AG04449 (cell line): ENCODE measurements at regions of chr11 and their contacts with region 1.

Region 1: DNA sequence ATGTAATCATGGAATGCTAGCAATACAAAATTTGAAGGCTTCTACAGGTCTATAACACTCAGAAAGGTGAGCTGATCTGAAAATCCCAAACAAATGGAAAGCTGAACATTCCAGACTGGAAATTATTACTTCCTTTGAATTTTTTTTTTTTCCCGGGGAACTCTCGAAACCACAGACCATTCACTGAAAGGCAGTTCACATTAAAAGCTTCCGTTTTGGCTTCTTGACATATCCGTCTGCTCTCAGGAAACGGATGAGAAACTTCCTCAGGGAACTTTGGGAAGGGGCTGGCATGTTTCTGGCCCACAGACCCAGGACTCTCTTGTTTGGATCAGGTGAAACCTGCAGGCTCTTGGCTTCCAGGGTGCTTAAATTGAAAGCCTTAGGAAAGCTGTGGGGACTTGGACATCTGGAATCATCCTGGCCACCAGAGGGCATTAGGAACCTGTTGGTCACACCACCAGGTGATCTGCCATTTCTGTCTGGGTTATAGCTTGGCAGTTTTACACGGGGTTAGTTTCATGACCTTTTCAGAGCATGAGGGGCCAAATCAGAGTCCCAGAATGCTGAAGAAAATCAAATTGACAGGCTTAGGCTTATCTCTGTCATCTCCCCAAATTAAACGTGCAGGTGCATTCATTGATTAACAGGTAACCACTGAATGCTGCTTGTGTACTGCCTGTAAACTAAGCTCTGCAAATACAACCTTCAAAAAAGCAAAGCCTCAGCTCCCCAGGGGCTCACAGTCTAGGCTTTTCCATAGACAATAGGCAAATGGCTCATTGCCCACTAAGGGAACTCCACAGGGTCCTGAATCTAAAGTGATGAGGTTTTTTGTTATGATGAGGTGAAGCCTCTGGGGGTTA is 22.7 kb upstream of the GRAMD1B start:
- DNase-seq: no peak
- H3K4me3 ChIP-seq: no peak overlapping the region
- CTCF ChIP-seq: peak; percentile 74

Region 2: GRCh38 chr11:123103326-123103980 is 303.9 kb before region 1 on chr11:
- CTCF ChIA-PET with region 1: interaction called, 31 read pairs
- POLR2A ChIA-PET with region 1: no interaction called
- DNase-seq: peak; percentile 45
- H3K4me3 ChIP-seq: no peak overlapping the region
- CTCF ChIP-seq: peak; percentile 48

Region 3: DNA sequence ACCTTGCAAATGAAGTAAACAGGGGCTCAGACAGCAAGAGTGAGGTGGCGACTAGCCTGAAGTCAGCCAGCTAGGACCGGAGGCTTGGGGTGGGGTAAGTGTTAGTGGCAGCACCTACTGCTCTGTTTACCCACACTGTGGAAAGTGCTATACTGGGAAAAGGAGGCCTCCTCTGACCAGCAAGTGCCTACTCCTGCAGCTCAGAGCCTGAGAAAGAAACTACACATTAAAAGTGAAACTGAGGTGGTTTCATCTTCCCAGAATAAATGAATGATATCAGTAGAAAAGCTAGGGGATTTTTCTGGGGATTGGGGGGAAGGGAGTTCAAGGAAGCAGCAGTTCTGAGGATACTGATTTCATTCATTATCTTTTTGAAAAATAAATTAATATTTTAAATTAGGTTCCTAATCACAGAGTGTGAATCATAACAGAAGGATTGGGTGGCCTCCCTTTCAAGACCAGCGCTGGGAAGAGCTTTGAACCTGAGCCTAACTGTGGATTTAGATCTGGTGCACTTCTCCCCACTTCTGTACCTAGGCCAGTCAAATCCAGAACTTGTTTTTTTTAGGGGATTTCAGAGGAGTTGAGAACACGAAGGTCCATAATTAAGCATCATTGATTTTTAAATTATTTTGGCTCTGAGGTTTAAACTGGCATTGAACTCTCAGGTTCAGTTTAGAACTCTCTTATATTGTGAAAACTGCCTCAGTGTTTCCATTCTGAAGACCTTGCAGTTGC is 25.4 kb before region 1 on chr11:
- CTCF ChIA-PET with region 1: interaction called, 21 read pairs
- POLR2A ChIA-PET with region 1: no interaction called
- DNase-seq: no peak
- H3K4me3 ChIP-seq: no peak overlapping the region
- CTCF ChIP-seq: no peak

Region 4: GRCh38 chr11:123429913-123430720 is 22.8 kb after region 1 on chr11 and contains the start of gene GRAMD1B:
- CTCF ChIA-PET with region 1: interaction called, 58 read pairs
- POLR2A ChIA-PET with region 1: no interaction called
- DNase-seq: peak; percentile 71
- H3K4me3 ChIP-seq: peak within 1 kb of the TSS; percentile 89
- CTCF ChIP-seq: peak; percentile 44

Region 5: DNA sequence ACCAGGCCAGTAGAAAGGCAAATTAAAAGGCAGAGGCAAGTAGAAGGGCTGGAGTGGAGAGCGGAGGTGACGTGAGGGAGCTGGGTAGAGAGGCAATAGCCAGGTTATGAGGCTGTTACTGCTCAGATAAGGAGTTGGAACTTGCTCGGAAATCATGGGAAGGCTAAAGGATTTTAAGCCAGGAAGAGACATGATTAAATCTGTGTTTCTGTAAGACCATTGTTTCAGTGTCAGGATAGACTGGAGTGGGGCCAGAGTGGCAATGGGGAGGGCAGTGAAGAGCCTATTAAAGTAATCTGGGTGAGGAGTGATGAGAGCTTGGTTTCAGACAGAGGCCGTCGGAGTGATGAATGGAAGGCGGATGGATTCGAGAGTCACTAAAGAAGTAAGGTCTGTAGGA is 61.7 kb after region 1 on chr11:
- CTCF ChIA-PET with region 1: interaction called, 422 read pairs
- POLR2A ChIA-PET with region 1: no interaction called
- DNase-seq: no peak
- H3K4me3 ChIP-seq: no peak overlapping the region
- CTCF ChIP-seq: no peak

Region 6: GRCh38 chr11:123494195-123495050 is 87.1 kb after region 1 on chr11:
- CTCF ChIA-PET with region 1: interaction called, 12 read pairs
- POLR2A ChIA-PET with region 1: no interaction called
- DNase-seq: no peak
- H3K4me3 ChIP-seq: no peak overlapping the region
- CTCF ChIP-seq: no peak

Region 7: DNA sequence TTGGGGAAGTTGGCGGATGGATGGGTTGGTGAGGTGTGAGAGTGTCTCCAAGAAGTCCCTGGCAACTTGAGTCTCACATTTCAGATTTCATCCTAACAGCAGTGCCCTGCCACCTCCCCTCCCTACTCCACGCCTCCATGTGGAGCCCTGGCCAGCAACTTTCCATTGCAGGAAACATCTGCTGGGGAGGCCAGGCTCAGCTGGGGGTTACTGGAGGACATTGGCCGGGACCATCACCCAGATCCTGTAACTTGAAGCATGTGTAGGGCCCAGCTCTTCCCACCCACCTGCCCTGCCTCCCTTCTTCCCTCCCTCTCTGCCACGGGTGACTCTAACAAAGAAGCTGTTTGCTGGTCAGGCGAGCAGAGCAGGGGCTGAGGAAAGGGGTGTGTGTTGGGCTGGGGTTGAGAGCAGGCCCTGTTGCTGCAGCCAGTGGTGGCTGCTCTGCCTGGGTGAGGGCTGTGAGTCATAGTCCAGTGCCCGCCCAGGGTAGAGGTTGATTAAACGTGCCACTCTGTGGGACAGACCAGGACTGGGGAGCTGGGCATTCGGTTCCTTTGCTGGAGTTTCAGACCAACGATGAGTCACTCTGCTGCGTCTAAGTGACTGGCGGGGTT is 183.0 kb after region 1 on chr11:
- CTCF ChIA-PET with region 1: no interaction called
- POLR2A ChIA-PET with region 1: no interaction called
- DNase-seq: no peak
- H3K4me3 ChIP-seq: no peak overlapping the region
- CTCF ChIP-seq: no peak

Region 8: GRCh38 chr11:124190298-124191185 is 783.2 kb after region 1 on chr11:
- CTCF ChIA-PET with region 1: no interaction called
- POLR2A ChIA-PET with region 1: no interaction called
- DNase-seq: no peak
- H3K4me3 ChIP-seq: no peak overlapping the region
- CTCF ChIP-seq: no peak